Gastrocnemius medialis (tissue), 4 donors: ENCODE measurements at regions of chr20 and their contacts with region 1.

Region 1: GRCh38 chr20:62623488-62624324 is 18.6 kb upstream of the SLCO4A1 start:
- DNase-seq: peak; percentile 89 to 96
- ATAC-seq: peak; percentile 83 to 88
- H3K4me3 ChIP-seq: peak overlapping the region in 3 of 4 donors; percentile 17 to 28 (median 23)
- H3K27ac ChIP-seq: peak overlapping the region; percentile 83 to 91 (median 89)
- H3K4me1 ChIP-seq: peaks cover 32 to 33% of the 10 kb centered on the region in 2 donors
- H3K27me3 ChIP-seq: peaks cover 0 to 3% (median 0%) of the 10 kb centered on the region in 3 donors
- CTCF ChIP-seq: no peak
- POLR2A ChIP-seq: peak; percentile 78 to 85

Region 2: DNA sequence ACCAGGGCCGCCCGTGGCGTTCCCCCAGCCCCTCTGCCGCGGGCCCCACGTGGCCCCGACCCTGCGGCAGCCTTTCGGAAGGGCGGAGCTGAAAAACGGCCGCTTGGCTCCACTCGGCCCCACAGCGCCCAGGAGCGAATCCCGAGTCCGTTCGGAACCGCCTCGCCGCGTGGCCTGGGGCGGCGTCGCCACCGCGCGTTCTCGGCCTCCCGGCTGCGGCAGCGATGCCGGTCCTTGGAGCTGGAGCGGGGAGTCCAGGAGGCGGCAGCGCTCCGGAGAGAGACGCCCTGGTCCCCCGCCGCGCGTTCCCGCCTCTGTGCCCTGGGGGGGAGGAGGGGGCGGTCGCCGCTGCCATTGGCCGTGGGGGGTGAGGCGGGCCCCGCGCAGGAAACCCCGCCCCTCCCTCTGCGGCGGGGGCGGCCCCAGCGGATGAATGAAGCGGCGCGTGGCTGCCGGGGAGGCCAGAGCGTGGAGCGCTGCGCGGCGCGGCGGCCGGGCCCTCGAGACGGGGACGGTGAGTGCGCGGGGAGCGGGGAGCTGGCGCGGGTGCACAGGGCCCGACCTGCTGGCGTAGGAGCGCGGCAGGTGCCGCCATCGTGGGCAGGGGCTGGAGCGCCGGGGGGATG is 18.4 kb after region 1 on chr20 and contains the start of gene SLCO4A1:
- in situ Hi-C with region 1: no loop called
- intact Hi-C with region 1: loop called (anchors 1 kb)
- DNase-seq: peak; percentile 62 to 71
- ATAC-seq: peak; percentile 58 to 74
- H3K4me3 ChIP-seq: peak within 1 kb of the TSS; percentile 66 to 72 (median 70)
- H3K27ac ChIP-seq: peak within 1 kb of the TSS; percentile 76 to 95 (median 91)
- H3K4me1 ChIP-seq: peaks cover 13 to 35% of the 10 kb centered on the region in 2 donors
- H3K27me3 ChIP-seq: peaks cover 8 to 12% (median 9%) of the 10 kb centered on the region in 3 donors
- CTCF ChIP-seq: peak in 1 of 5 experiments; percentile 19
- POLR2A ChIP-seq: peak; percentile 95 to 96
- total RNA-seq, gene SLCO4A1: 20.4 to 26.9 (median 21.8) TPM

Region 3: DNA sequence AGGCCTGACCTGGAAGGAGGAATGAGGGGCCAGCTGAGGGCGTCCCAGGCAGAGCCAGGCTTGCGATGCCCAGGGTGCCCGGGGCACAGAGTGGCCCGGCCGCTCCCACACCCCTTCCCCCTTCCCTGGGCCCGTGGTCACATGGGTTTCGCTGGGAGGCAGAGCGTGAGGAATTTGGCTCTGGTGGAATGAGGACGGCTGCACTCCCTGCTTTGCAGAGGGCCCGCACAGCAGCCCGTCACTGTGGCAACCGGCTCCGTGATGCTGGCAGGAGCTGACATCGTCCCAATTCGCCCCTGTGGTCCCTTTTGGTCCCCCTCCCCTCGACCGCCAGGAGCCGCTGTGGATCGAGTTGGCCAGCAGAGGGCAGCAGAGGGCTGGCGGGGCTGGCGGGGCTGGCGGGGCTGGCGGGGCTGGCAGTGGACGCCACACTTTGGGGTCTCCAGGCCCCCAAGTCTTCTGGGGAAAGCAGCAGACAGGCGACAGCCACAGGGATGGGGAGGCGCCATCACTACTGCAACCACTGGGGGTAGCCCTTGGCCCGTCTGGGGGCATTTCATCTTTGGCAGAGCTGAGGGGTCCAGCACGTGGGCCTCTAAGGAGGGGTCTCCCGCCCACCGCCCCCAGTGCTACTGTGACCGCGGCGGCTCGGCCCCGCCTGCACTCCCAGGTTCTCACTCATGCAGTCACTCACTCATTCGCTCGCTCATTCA is 432.7 kb after region 1 on chr20:
- in situ Hi-C with region 1: no loop called
- intact Hi-C with region 1: no loop called
- DNase-seq: peak in 1 of 2 donors; percentile 9
- ATAC-seq: peak in 1 of 2 donors; percentile 33
- H3K4me3 ChIP-seq: no peak overlapping the region
- H3K27ac ChIP-seq: no peak overlapping the region
- H3K4me1 ChIP-seq: peaks cover 0 to 7% of the 10 kb centered on the region in 2 donors
- H3K27me3 ChIP-seq: peaks cover 37 to 53% (median 45%) of the 10 kb centered on the region in 3 donors
- CTCF ChIP-seq: peak; percentile 44 to 88 (median 74)
- POLR2A ChIP-seq: no peak